ENCODE measurements at regions of chr1 and their contacts with region 1.

Region 1: GRCh38 chr1:180252638-180253536 is 22.8 kb downstream of the LHX4 start:
- DNase-seq: peak; percentile 49 to 90
- H3K4me3 ChIP-seq: no peak overlapping the region
- H3K4me1 ChIP-seq: no peaks in the 10 kb centered on the region
- H3K27me3 ChIP-seq: no peaks in the 10 kb centered on the region

Region 2: GRCh38 chr1:180415985-180416633 is 163.2 kb after region 1 on chr1:
- in situ Hi-C with region 1: loop called (anchors 5 kb)
- DNase-seq: peak in 1 of 2 experiments; percentile 55
- H3K4me3 ChIP-seq: no peak overlapping the region
- H3K4me1 ChIP-seq: no peaks in the 10 kb centered on the region
- H3K27me3 ChIP-seq: no peaks in the 10 kb centered on the region

Region 3: DNA sequence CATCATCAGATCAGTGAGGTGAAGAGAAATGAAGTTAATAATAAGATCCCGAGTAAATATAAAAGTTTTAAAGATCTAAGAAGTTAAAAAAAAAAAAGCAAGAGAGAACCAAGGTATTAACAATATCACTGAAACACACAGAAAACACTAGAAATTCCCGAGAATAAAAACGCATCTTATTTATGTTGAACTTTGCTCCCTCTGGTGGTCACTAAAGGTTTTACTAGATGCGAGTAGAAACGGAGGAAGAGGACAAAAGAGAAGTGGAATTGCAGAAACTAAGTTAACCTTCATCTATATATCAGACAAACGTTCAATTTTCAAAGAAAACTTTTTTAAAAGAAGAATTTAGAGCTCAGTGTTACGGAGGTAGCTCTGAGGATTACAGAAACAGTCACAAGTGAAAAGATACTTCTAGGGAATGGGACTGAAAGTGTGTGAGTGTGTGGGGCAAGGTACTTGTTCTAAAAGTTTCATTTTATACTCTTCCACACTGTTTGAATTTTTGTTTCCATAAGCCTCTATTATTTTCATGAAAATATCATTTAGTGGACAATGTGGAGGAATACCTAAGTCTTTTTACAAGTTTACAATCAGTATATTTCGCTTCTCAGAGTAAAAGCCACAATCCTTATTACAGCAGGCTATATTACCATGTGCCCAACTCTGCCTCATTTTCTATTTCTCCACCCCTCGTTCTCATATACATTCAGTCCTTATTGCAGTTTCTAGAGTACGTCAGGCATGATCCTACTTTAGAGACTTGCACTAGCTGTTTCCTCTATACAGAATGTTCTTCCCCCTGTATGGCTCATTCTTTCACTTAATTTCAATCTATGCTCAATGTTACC is 229.8 kb after region 1 on chr1:
- in situ Hi-C with region 1: loop called (anchors 5 kb)
- DNase-seq: peak; percentile 42 to 63
- H3K4me3 ChIP-seq: no peak overlapping the region
- H3K4me1 ChIP-seq: no peaks in the 10 kb centered on the region
- H3K27me3 ChIP-seq: no peaks in the 10 kb centered on the region

Measured in HAP-1 (cell line).